GM12878 (cell line): ENCODE measurements at regions of chr18 and their contacts with region 1.

Region 1: GRCh38 chr18:70195852-70196434 is 9.5 kb downstream of the RTTN start:
- DNase-seq: no peak
- ATAC-seq: peak; percentile 45
- H3K4me3 ChIP-seq: no peak overlapping the region
- H3K27ac ChIP-seq: peak overlapping the region; percentile 95
- H3K4me1 ChIP-seq: peaks cover 30% of the 10 kb centered on the region
- H3K27me3 ChIP-seq: no peaks in the 10 kb centered on the region
- CTCF ChIP-seq: peak; percentile 64 to 71 (median 66)
- EP300 ChIP-seq: no peak
- POLR2A ChIP-seq: no peak
- RAD21 ChIP-seq: peak; percentile 66

Region 2: GRCh38 chr18:68638613-68639012 is 1557.3 kb before region 1 on chr18:
- CTCF ChIA-PET with region 1: no interaction called
- POLR2A ChIA-PET with region 1: interaction called, 13 read pairs
- RAD21 ChIA-PET with region 1: no interaction called
- SMC1A ChIA-PET with region 1: no interaction called
- in situ Hi-C with region 1: no loop called
- intact Hi-C with region 1: no loop called
- DNase-seq: no peak
- ATAC-seq: no peak
- H3K4me3 ChIP-seq: no peak overlapping the region
- H3K27ac ChIP-seq: no peak overlapping the region
- H3K4me1 ChIP-seq: no peaks in the 10 kb centered on the region
- H3K27me3 ChIP-seq: no peaks in the 10 kb centered on the region
- CTCF ChIP-seq: no peak
- EP300 ChIP-seq: no peak
- POLR2A ChIP-seq: no peak
- RAD21 ChIP-seq: no peak

Region 3: GRCh38 chr18:70082430-70082829 is 113.5 kb before region 1 on chr18:
- CTCF ChIA-PET with region 1: interaction called, 3 read pairs
- POLR2A ChIA-PET with region 1: no interaction called
- RAD21 ChIA-PET with region 1: interaction called, 3 read pairs
- SMC1A ChIA-PET with region 1: interaction called, 10 read pairs
- in situ Hi-C with region 1: no loop called
- intact Hi-C with region 1: no loop called
- DNase-seq: no peak
- ATAC-seq: no peak
- H3K4me3 ChIP-seq: no peak overlapping the region
- H3K27ac ChIP-seq: no peak overlapping the region
- H3K4me1 ChIP-seq: no peaks in the 10 kb centered on the region
- H3K27me3 ChIP-seq: no peaks in the 10 kb centered on the region
- CTCF ChIP-seq: no peak
- EP300 ChIP-seq: no peak
- POLR2A ChIP-seq: no peak
- RAD21 ChIP-seq: no peak

Region 4: GRCh38 chr18:70158992-70159717 is 36.8 kb before region 1 on chr18:
- CTCF ChIA-PET with region 1: interaction called, 3 read pairs
- POLR2A ChIA-PET with region 1: no interaction called
- RAD21 ChIA-PET with region 1: interaction called, 6 read pairs
- SMC1A ChIA-PET with region 1: interaction called, 24 read pairs
- in situ Hi-C with region 1: no loop called
- intact Hi-C with region 1: no loop called
- DNase-seq: peak; percentile 68
- ATAC-seq: peak; percentile 88
- H3K4me3 ChIP-seq: no peak overlapping the region
- H3K27ac ChIP-seq: peak overlapping the region; percentile 47
- H3K4me1 ChIP-seq: peaks cover 9% of the 10 kb centered on the region
- H3K27me3 ChIP-seq: no peaks in the 10 kb centered on the region
- CTCF ChIP-seq: no peak
- EP300 ChIP-seq: no peak
- POLR2A ChIP-seq: no peak
- RAD21 ChIP-seq: no peak

Region 5: DNA sequence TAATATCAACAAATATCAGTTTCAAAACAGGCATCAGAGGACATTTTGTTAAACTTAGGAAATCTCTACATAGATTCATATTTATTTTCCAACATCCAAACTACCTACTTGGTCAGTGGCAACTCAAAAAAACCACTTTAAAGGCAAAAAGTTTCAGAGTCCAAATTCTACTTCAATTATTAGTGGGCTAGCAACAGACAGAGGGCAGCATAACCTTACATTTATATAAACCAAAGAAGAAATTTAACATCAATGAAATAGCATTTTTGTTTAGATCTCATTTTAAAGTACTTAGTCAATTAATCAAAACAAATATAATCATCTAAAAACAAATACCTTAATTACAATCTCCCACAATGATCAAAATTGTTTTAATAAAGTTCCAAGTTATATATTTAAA is 23.7 kb before region 1 on chr18:
- CTCF ChIA-PET with region 1: interaction called, 42 read pairs
- POLR2A ChIA-PET with region 1: interaction called, 4 read pairs
- RAD21 ChIA-PET with region 1: interaction called, 8 read pairs
- SMC1A ChIA-PET with region 1: interaction called, 18 read pairs
- in situ Hi-C with region 1: no loop called
- intact Hi-C with region 1: no loop called
- DNase-seq: no peak
- ATAC-seq: peak; percentile 41; the same call in 1 of the 3 replicates
- H3K4me3 ChIP-seq: no peak overlapping the region
- H3K27ac ChIP-seq: no peak overlapping the region
- H3K4me1 ChIP-seq: no peaks in the 10 kb centered on the region
- H3K27me3 ChIP-seq: no peaks in the 10 kb centered on the region
- CTCF ChIP-seq: peak; percentile 13 to 52 (median 26); a peak in 4 of 6 replicates
- EP300 ChIP-seq: no peak
- POLR2A ChIP-seq: no peak
- RAD21 ChIP-seq: peak; percentile 65

Region 6: DNA sequence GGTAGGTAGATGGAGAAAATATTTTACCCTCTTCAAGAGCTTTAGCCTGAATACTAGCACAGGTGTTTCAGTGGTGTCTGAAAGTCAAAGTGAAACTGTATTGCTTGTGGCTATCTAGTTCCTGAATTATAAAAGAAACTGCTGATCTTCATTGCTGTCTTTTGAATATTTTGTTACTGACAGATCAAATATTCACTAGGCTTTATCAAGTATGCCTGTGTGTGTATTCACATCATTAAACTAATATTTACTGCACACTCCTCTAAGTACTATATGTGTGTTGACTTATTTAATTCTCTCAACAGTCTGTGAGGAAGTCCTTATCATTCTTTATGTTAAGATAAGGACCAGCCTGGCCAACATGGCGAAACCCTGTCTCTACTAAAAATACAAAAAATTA is 232.5 kb after region 1 on chr18:
- CTCF ChIA-PET with region 1: interaction called, 154 read pairs
- POLR2A ChIA-PET with region 1: no interaction called
- RAD21 ChIA-PET with region 1: interaction called, 35 read pairs
- SMC1A ChIA-PET with region 1: interaction called, 61 read pairs
- in situ Hi-C with region 1: loop called (anchors 5 kb)
- intact Hi-C with region 1: no loop called
- DNase-seq: peak; percentile 41
- ATAC-seq: peak; percentile 97
- H3K4me3 ChIP-seq: no peak overlapping the region
- H3K27ac ChIP-seq: no peak overlapping the region
- H3K4me1 ChIP-seq: peaks cover 13% of the 10 kb centered on the region; the same call in 1 of the 2 replicates
- H3K27me3 ChIP-seq: no peaks in the 10 kb centered on the region
- CTCF ChIP-seq: no peak
- EP300 ChIP-seq: no peak
- POLR2A ChIP-seq: no peak
- RAD21 ChIP-seq: no peak

Region 7: GRCh38 chr18:70454704-70455322 is 258.9 kb after region 1 on chr18:
- CTCF ChIA-PET with region 1: interaction called, 60 read pairs
- POLR2A ChIA-PET with region 1: no interaction called
- RAD21 ChIA-PET with region 1: interaction called, 10 read pairs
- SMC1A ChIA-PET with region 1: interaction called, 18 read pairs
- in situ Hi-C with region 1: no loop called
- intact Hi-C with region 1: loop called (anchors 5 kb)
- DNase-seq: no peak
- ATAC-seq: peak; percentile 87
- H3K4me3 ChIP-seq: no peak overlapping the region
- H3K27ac ChIP-seq: no peak overlapping the region
- H3K4me1 ChIP-seq: no peaks in the 10 kb centered on the region
- H3K27me3 ChIP-seq: no peaks in the 10 kb centered on the region; a peak in 1 of 4 replicates
- CTCF ChIP-seq: peak; percentile 64 to 72 (median 70); a peak in 5 of 6 replicates
- EP300 ChIP-seq: no peak
- POLR2A ChIP-seq: no peak
- RAD21 ChIP-seq: peak; percentile 68